Heart left ventricle (tissue), 16 donors: ENCODE measurements at regions of chr15 and their contacts with region 1.

Region 1: GRCh38 chr15:84915011-84915958 is 30.8 kb downstream of the SLC28A1 start:
- DNase-seq: peak; percentile 84 to 96 (median 89)
- ATAC-seq: peak; percentile 87 to 91 (median 88)
- H3K4me3 ChIP-seq: no peak overlapping the region
- H3K27ac ChIP-seq: peak overlapping the region; percentile 55 to 96 (median 90)
- H3K4me1 ChIP-seq: peaks cover 24 to 67% (median 48%) of the 10 kb centered on the region in 12 donors
- H3K27me3 ChIP-seq: no peaks in the 10 kb centered on the region
- CTCF ChIP-seq: no peak
- POLR2A ChIP-seq: peak in 1 of 2 donors; percentile 65

Region 2: DNA sequence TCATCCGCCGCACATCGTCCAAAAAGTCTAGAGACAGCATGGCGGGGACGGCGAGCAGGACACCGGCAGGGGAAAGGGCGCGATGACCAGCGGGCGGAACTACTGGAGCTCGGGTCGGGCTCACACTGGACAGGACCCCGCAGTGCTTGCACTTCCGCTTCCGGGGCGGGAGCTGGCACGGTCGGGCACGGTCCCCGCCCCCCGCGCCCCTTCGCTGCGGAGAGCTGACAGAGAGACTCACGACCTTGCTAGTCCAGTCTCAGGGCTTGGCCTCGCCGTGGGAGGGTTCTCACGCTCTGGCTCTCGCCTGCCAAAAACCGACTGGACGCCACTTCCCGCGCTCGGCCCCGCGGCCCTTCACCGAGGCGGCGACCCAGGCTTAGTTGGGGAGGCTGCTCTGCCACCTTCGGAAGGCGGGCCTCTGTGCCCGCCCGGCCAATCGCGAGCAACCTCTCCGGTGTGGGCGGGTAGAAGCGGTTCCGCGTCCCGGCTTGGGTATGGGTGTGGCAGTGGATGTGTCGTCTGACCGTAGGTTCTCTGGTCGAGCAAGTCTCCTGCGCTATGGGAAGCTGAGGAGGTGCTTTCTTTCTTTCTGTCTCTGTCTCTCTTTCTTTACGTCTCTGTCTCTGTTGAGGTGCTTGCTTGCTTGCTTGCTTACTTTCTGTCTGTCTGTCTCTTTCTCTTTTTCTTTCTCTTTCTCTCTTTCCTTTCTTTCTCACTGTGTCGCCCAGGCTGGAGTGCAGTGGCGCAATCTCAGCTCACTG is 199.1 kb before region 1 on chr15 and contains the start of gene SEC11A:
- intact Hi-C with region 1: loop called in 2 of 10 experiments (anchors 10 kb)
- DNase-seq: peak; percentile 95 to 98 (median 96)
- ATAC-seq: peak; percentile 98 to 99 (median 98)
- H3K4me3 ChIP-seq: peak within 1 kb of the TSS; percentile 58 to 98 (median 82)
- H3K27ac ChIP-seq: peak within 1 kb of the TSS; percentile 86 to 99 (median 94)
- H3K4me1 ChIP-seq: peaks cover 8 to 52% (median 25%) of the 10 kb centered on the region in 12 donors
- H3K27me3 ChIP-seq: no peaks in the 10 kb centered on the region
- CTCF ChIP-seq: no peak
- POLR2A ChIP-seq: peak in 1 of 2 donors; percentile 76
- total RNA-seq, gene SEC11A: 55.7 to 95.7 (median 73.0) TPM

Region 3: GRCh38 chr15:84840741-84841429 is 74.4 kb before region 1 on chr15:
- intact Hi-C with region 1: loop called in 1 of 10 experiments (anchors 5 kb)
- DNase-seq: peak; percentile 77 to 92 (median 87)
- ATAC-seq: peak; percentile 74 to 88 (median 86)
- H3K4me3 ChIP-seq: peak overlapping the region in 5 of 12 donors; percentile 2 to 15 (median 6)
- H3K27ac ChIP-seq: peak overlapping the region; percentile 85 to 99 (median 96)
- H3K4me1 ChIP-seq: peaks cover 0 to 85% (median 44%) of the 10 kb centered on the region in 12 donors
- H3K27me3 ChIP-seq: no peaks in the 10 kb centered on the region
- CTCF ChIP-seq: no peak
- POLR2A ChIP-seq: peak in 1 of 2 donors; percentile 77

Region 4: DNA sequence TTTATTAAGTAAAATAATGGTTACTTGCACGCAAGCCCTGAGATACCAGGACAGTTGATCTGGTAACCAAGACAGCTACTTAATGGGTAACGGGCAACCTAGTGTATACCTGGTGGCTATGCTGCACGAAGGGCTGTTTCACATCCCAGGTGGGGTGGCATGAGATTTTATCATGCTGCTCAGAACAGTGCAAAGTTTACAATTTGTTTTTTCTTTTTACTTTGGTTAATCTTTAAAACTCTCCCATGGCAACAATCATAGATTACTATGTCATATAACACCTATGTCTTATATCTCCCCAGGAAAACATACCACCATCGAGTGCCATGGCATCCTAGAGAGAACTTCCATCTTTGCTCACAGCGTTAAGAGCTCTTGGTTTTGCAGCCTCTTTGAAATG is 63.1 kb before region 1 on chr15:
- intact Hi-C with region 1: loop called in 1 of 10 experiments (anchors 5 kb)
- DNase-seq: no peak
- ATAC-seq: no peak
- H3K4me3 ChIP-seq: no peak overlapping the region
- H3K27ac ChIP-seq: peak overlapping the region in 3 of 12 donors; percentile 1 to 19 (median 2)
- H3K4me1 ChIP-seq: peaks cover 0 to 40% (median 16%) of the 10 kb centered on the region in 12 donors
- H3K27me3 ChIP-seq: no peaks in the 10 kb centered on the region
- CTCF ChIP-seq: no peak
- POLR2A ChIP-seq: no peak

Region 5: DNA sequence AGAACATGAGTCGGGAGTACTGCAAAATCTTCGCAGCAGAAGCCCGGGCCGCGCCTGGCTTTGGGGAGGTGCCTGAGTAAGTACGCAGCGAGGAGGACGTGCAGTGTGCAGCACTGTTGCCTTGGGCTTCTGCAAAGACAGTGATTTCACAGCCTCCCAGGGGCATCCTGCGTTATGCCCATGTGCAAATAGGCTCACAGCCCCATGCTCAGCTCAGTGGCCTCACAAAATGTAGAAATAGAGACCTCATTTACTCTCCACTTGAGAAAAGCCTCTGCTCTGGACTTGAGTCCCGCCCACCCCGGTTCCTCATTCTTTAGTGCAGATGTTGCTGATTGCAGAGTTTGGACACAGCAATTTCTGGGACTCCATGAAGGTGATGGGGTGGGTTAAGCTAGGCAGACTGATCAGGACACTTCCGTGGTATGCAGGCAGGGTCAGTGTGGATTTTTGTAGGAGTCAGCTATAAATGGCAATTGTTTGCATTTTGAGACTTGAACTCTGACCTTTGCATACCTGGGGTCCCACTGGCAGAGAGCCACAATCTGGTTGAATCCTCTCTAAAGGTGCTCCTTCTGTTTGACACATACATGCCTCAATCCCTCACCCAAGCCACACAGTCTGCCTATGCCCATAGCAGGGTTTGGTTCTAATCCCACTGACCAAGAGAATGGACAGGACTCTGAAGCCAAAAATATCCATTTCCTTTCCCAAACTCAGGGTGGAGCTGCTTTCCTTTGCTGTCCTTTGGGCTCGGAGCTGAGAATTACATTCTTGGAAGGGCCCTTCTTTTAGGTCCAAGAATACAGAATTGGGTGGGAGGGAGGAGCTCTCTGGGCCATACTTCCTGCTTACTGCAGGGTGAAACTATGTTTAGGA is 51.5 kb before region 1 on chr15:
- intact Hi-C with region 1: loop called in 4 of 10 experiments (anchors 5 kb)
- DNase-seq: peak in 1 of 5 donors; percentile 47
- ATAC-seq: peak; percentile 24 to 40 (median 34)
- H3K4me3 ChIP-seq: peak overlapping the region in 6 of 12 donors; percentile 0 to 32 (median 17)
- H3K27ac ChIP-seq: peak overlapping the region in 11 of 12 donors; percentile 30 to 81 (median 52)
- H3K4me1 ChIP-seq: peaks cover 0 to 37% (median 20%) of the 10 kb centered on the region in 12 donors
- H3K27me3 ChIP-seq: no peaks in the 10 kb centered on the region
- CTCF ChIP-seq: peak in 10 of 12 donors; percentile 26 to 56 (median 42)
- POLR2A ChIP-seq: no peak

Region 6: GRCh38 chr15:84871428-84872305 is 43.6 kb before region 1 on chr15:
- intact Hi-C with region 1: loop called in 1 of 10 experiments (anchors 5 kb)
- DNase-seq: no peak
- ATAC-seq: peak; percentile 13 to 21 (median 15)
- H3K4me3 ChIP-seq: no peak overlapping the region
- H3K27ac ChIP-seq: peak overlapping the region in 1 of 12 donors; percentile 17
- H3K4me1 ChIP-seq: peaks cover 0 to 12% (median 0%) of the 10 kb centered on the region in 12 donors
- H3K27me3 ChIP-seq: no peaks in the 10 kb centered on the region
- CTCF ChIP-seq: peak in 3 of 12 donors; percentile 4 to 16 (median 16)
- POLR2A ChIP-seq: no peak

Region 7: GRCh38 chr15:84973492-84974460 is 58.5 kb after region 1 on chr15:
- intact Hi-C with region 1: no loop called
- DNase-seq: peak in 1 of 5 donors; percentile 34
- ATAC-seq: peak in 1 of 4 donors; percentile 24
- H3K4me3 ChIP-seq: no peak overlapping the region
- H3K27ac ChIP-seq: peak overlapping the region in 2 of 12 donors; percentile 5 to 24
- H3K4me1 ChIP-seq: peaks cover 0 to 6% (median 0%) of the 10 kb centered on the region in 12 donors
- H3K27me3 ChIP-seq: no peaks in the 10 kb centered on the region
- CTCF ChIP-seq: no peak
- POLR2A ChIP-seq: no peak